PC-3 (cell line): ENCODE measurements at regions of chr3 and their contacts with region 1.

Region 1: GRCh38 chr3:83934312-83935150 is 1024.3 kb upstream of the CADM2 start:
- DNase-seq: peak; percentile 96
- ATAC-seq: peak; percentile 84
- H3K4me3 ChIP-seq: no peak overlapping the region; the same call in 1 of the 2 replicates
- H3K27ac ChIP-seq: peak overlapping the region; percentile 92
- H3K4me1 ChIP-seq: peaks cover 33% of the 10 kb centered on the region
- H3K27me3 ChIP-seq: no peaks in the 10 kb centered on the region
- CTCF ChIP-seq: 0 out of 2 replicates have a peak, but pooled peaks have one; percentile 35

Region 2: DNA sequence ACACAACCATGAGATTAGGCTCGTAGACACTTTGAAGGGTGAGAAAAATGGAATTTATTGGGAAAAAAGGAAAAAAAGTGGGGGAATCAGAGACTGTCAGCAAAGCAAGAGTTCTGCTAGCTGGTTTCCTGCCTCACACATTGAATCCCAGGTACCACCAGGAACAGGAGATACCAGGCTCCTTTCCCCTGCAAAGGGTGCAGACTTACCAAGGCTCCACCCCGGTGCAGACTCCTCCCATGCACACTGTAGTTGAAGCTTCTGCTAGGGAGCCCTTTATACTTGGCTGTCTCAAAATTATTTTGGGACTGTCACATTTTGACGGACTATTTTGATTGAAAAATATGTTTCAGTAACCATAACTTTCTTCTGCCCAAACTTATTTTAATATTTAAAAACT is 1353.2 kb before region 1 on chr3:
- CTCF ChIA-PET with region 1: no interaction called
- POLR2A ChIA-PET with region 1: interaction called, 21 read pairs
- intact Hi-C with region 1: no loop called
- DNase-seq: no peak
- ATAC-seq: no peak; the same call in 1 of the 2 replicates
- H3K4me3 ChIP-seq: no peak overlapping the region
- H3K27ac ChIP-seq: no peak overlapping the region
- H3K4me1 ChIP-seq: no peaks in the 10 kb centered on the region
- H3K27me3 ChIP-seq: no peaks in the 10 kb centered on the region
- CTCF ChIP-seq: no peak

Region 3: DNA sequence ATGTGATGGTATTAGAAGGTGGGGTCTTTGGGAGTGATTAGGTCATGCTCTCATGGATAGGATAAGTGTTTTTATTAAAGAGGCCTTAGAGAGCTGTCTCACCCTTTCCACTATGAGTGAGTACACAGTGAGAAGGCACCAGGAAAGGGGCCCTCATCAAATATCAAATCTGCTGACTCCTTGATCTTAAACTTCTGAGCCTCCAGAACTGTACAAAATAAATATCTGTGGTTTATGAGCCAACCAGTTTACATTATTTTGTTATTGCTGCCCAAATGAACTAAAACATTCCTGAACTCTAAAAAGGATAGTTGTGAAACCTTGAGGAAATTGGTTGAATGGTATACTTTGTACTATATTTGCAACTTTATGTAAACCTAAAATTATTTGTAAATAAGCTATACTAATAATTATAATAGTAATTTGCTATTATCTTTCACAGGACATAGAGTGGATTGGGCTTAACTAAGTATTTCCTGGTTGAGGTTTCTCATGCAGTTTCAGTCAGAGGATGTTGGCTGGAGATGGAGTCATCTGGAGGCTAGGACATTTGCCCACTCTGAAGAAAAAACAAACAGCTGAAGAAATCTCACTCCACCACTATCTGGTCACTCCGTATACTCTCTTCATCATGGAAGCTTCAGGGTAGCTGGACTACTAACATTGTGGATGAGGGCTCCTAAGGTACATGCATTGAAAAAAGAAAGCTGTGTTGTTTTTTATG is 44.3 kb before region 1 on chr3:
- CTCF ChIA-PET with region 1: no interaction called
- POLR2A ChIA-PET with region 1: no interaction called
- intact Hi-C with region 1: loop called (anchors 1 kb)
- DNase-seq: peak; percentile 85
- ATAC-seq: peak; percentile 74
- H3K4me3 ChIP-seq: no peak overlapping the region
- H3K27ac ChIP-seq: peak overlapping the region; percentile 97
- H3K4me1 ChIP-seq: peaks cover 53% of the 10 kb centered on the region
- H3K27me3 ChIP-seq: no peaks in the 10 kb centered on the region
- CTCF ChIP-seq: no peak

Region 4: GRCh38 chr3:83902842-83903533 is 31.5 kb before region 1 on chr3:
- CTCF ChIA-PET with region 1: no interaction called
- POLR2A ChIA-PET with region 1: interaction called, 16 read pairs
- intact Hi-C with region 1: no loop called
- DNase-seq: peak; percentile 75
- ATAC-seq: peak; percentile 82
- H3K4me3 ChIP-seq: no peak overlapping the region
- H3K27ac ChIP-seq: peak overlapping the region; percentile 87
- H3K4me1 ChIP-seq: peaks cover 17% of the 10 kb centered on the region
- H3K27me3 ChIP-seq: no peaks in the 10 kb centered on the region
- CTCF ChIP-seq: no peak

Region 5: GRCh38 chr3:84184937-84185520 is 250.5 kb after region 1 on chr3:
- CTCF ChIA-PET with region 1: no interaction called
- POLR2A ChIA-PET with region 1: no interaction called
- intact Hi-C with region 1: no loop called
- DNase-seq: peak; percentile 40
- ATAC-seq: peak; percentile 78
- H3K4me3 ChIP-seq: no peak overlapping the region
- H3K27ac ChIP-seq: peak overlapping the region; percentile 22
- H3K4me1 ChIP-seq: peaks cover 7% of the 10 kb centered on the region; the same call in 1 of the 2 replicates
- H3K27me3 ChIP-seq: no peaks in the 10 kb centered on the region
- CTCF ChIP-seq: no peak